ENCODE measurements at regions of chr4 and their contacts with region 1.

Region 1: GRCh38 chr4:9704551-9705332 is 76.7 kb upstream of the DRD5 start:
- DNase-seq: no peak
- H3K4me3 ChIP-seq: no peak overlapping the region
- H3K27ac ChIP-seq: no peak overlapping the region
- H3K4me1 ChIP-seq: no peaks in the 10 kb centered on the region
- H3K27me3 ChIP-seq: no peaks in the 10 kb centered on the region
- CTCF ChIP-seq: no peak

Region 2: DNA sequence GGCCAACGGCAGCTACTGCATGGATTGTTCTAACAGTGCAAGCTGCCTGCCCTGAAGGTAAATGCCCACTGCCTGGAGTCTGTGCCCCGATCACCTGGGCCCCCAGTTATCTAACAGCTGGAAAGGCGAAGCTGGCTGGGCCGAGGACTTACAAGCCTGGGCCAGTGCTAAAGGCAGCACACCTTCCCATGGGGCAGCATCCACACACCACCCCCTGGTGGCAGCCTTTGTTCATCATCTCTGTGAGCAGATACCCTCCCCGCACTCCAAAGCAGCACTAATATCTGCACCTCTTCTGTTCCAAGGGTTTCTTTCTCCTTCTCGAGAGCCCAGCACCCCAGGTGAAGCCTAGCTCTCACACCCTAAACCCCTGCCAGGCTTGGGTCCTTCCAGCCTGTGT is 309.0 kb after region 1 on chr4:
- CTCF ChIA-PET with region 1: interaction called, 7 read pairs
- dilution Hi-C with region 1: no loop called
- in situ Hi-C with region 1: no loop called
- intact Hi-C with region 1: loop called (anchors 1 kb)
- DNase-seq: peak; percentile 43
- H3K4me3 ChIP-seq: no peak overlapping the region
- H3K27ac ChIP-seq: no peak overlapping the region
- H3K4me1 ChIP-seq: peaks cover 26% of the 10 kb centered on the region
- H3K27me3 ChIP-seq: no peaks in the 10 kb centered on the region
- CTCF ChIP-seq: peak; percentile 58 to 84

Region 3: GRCh38 chr4:10063544-10064300 is 359.0 kb after region 1 on chr4:
- CTCF ChIA-PET with region 1: no interaction called
- dilution Hi-C with region 1: no loop called
- in situ Hi-C with region 1: no loop called
- intact Hi-C with region 1: loop called (anchors 1 kb)
- DNase-seq: peak; percentile 70
- H3K4me3 ChIP-seq: no peak overlapping the region
- H3K27ac ChIP-seq: no peak overlapping the region
- H3K4me1 ChIP-seq: peaks cover 9% of the 10 kb centered on the region
- H3K27me3 ChIP-seq: no peaks in the 10 kb centered on the region
- CTCF ChIP-seq: peak; percentile 95